ENCODE measurements at regions of chr1 and their contacts with region 1.

Region 1: GRCh38 chr1:221069178-221069903 is 190.1 kb downstream of the HLX start:
- DNase-seq: peak; percentile 59
- ATAC-seq: peak; percentile 83
- H3K4me3 Mint-ChIP-seq: peak overlapping the region; percentile 75
- H3K27ac Mint-ChIP-seq: peak overlapping the region; percentile 99
- H3K4me1 Mint-ChIP-seq: peaks cover 85% of the 10 kb centered on the region
- H3K27me3 Mint-ChIP-seq: no peaks in the 10 kb centered on the region
- CTCF ChIP-seq: no peak

Region 2: DNA sequence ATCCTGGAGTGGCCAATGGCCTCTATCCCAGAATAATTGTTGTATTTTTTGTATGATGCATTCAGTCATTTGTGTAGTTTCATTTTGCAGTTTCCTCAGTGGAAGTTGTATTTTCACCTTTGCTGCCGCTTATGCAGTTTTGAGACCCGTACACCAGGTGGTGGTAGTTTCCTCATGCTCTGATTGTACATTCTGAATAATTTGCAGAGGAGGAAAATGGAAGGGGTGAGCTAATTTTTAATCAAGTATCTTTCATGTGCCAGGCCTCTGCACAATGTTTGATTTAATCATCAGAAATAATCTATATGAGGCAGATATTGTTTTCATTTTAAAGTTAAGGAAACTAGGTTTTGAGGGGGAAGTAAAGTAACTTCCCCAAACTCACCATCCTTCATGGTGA is 160.6 kb before region 1 on chr1:
- CTCF ChIA-PET with region 1: interaction called, 7 read pairs
- POLR2A ChIA-PET with region 1: no interaction called
- intact Hi-C with region 1: loop called (anchors 5 kb)
- DNase-seq: no peak
- ATAC-seq: peak; percentile 52
- H3K4me3 Mint-ChIP-seq: no peak overlapping the region
- H3K27ac Mint-ChIP-seq: no peak overlapping the region
- H3K4me1 Mint-ChIP-seq: peaks cover 10% of the 10 kb centered on the region
- H3K27me3 Mint-ChIP-seq: peaks cover 9% of the 10 kb centered on the region
- CTCF ChIP-seq: no peak

Region 3: DNA sequence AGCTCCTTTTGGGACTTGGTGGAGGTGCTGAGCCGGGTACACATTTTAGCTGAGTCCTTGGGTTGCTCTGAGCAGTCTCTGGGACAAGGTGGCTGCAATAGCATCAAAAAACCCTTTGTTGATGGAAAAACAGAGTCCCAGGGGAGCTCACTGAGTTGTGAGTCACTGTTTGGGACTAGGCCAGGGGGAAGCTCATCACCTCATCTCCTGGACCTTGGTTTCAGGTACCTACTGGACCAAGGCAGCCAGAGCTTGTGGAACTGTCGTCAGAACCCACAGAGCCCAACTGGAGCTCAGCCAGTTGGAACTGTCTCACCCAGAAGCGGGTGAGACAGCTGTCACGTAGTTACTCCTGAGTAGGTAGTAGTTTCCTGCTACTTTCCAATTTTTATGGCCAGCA is 43.4 kb before region 1 on chr1:
- CTCF ChIA-PET with region 1: interaction called, 3 read pairs
- POLR2A ChIA-PET with region 1: interaction called, 7 read pairs
- intact Hi-C with region 1: loop called (anchors 1 kb)
- DNase-seq: peak; percentile 24
- ATAC-seq: peak; percentile 91
- H3K4me3 Mint-ChIP-seq: peak overlapping the region; percentile 9
- H3K27ac Mint-ChIP-seq: peak overlapping the region; percentile 54
- H3K4me1 Mint-ChIP-seq: peaks cover 24% of the 10 kb centered on the region
- H3K27me3 Mint-ChIP-seq: no peaks in the 10 kb centered on the region
- CTCF ChIP-seq: no peak

Region 4: GRCh38 chr1:221045842-221046831 is 23.2 kb before region 1 on chr1:
- CTCF ChIA-PET with region 1: no interaction called
- POLR2A ChIA-PET with region 1: interaction called, 57 read pairs
- intact Hi-C with region 1: loop called (anchors 1 kb)
- DNase-seq: no peak
- ATAC-seq: peak; percentile 90
- H3K4me3 Mint-ChIP-seq: peak overlapping the region; percentile 77
- H3K27ac Mint-ChIP-seq: peak overlapping the region; percentile 96
- H3K4me1 Mint-ChIP-seq: peaks cover 58% of the 10 kb centered on the region
- H3K27me3 Mint-ChIP-seq: no peaks in the 10 kb centered on the region
- CTCF ChIP-seq: no peak

Region 5: DNA sequence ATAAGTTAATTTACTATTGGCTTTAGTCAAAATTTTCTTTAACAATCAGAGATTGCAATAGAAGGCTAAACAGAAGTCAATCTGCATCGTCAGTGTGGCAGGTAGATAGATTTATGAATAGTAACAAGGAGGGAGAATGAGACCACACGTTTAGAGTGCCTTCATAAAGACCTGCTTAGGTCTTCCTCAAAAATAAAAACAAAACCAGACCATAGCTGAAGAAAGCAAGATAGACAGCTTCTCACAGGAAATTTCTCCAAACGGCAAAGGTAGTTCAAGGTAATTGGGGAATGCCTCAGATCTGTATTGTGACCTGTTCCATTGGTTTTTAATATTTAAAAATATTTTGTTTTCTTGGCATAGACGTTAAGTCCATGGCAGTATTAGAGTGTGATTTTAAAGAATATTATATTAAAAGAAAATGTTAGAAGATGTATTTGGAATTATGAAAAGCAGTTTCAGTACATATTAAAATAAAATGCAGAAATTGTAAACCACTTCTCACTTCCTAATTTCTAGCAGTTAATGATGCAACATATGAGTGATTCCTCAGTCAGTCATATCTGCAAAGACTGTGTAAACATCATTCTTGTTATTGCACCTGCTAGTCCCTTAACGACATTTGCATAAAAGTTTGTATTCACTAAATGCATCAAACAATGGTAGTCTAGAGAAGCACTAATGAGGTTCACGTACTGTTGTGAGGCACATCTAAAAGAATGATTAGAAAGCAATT is 87.9 kb after region 1 on chr1:
- CTCF ChIA-PET with region 1: no interaction called
- POLR2A ChIA-PET with region 1: no interaction called
- intact Hi-C with region 1: loop called (anchors 1 kb)
- DNase-seq: no peak
- ATAC-seq: peak; percentile 93
- H3K4me3 Mint-ChIP-seq: no peak overlapping the region
- H3K27ac Mint-ChIP-seq: peak overlapping the region; percentile 74
- H3K4me1 Mint-ChIP-seq: peaks cover 29% of the 10 kb centered on the region
- H3K27me3 Mint-ChIP-seq: peaks cover under 1% of the 10 kb centered on the region
- CTCF ChIP-seq: no peak

Region 6: DNA sequence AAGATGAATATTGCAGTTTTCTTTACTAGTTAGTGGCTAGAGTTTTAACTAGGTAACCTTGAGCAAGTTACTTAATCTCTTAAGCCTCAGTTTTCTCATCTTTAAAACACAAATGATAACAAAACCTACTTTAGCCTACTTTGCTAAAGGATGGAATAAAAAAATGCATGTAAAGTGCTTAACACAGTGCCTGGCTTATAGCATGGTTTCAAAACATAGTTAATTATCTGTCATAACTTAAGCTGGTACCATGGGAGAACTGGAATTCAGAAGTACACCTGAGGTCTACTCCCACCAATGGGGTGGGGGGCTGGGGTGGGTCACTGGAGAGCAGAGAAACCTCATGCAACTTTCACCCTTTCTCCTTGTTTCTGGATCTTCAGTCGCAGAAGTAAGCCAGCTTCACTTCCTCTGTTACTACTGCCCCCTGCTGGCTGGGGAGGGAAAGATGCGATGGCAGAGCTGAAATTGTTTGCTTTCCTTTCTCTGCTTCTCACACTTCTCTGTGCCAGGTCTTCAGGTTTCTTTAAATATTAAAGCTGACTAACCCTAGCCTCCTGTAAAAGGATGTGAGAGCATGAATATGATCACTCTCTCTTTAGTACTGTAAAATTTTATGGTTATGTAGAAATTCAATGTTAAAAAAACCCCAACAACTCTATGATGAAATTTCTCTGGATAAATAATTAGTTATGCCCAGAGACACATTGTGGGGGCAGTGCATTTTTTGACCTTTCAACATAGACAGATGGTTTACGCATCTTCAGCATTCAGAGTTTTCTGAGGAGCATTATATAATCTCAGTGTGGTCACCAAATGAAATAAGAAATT is 134.1 kb after region 1 on chr1:
- CTCF ChIA-PET with region 1: interaction called, 13 read pairs
- POLR2A ChIA-PET with region 1: interaction called, 3 read pairs
- intact Hi-C with region 1: loop called (anchors 2 kb)
- DNase-seq: peak; percentile 59
- ATAC-seq: peak; percentile 45
- H3K4me3 Mint-ChIP-seq: no peak overlapping the region
- H3K27ac Mint-ChIP-seq: no peak overlapping the region
- H3K4me1 Mint-ChIP-seq: peaks cover 3% of the 10 kb centered on the region
- H3K27me3 Mint-ChIP-seq: peaks cover 7% of the 10 kb centered on the region
- CTCF ChIP-seq: no peak

Region 7: DNA sequence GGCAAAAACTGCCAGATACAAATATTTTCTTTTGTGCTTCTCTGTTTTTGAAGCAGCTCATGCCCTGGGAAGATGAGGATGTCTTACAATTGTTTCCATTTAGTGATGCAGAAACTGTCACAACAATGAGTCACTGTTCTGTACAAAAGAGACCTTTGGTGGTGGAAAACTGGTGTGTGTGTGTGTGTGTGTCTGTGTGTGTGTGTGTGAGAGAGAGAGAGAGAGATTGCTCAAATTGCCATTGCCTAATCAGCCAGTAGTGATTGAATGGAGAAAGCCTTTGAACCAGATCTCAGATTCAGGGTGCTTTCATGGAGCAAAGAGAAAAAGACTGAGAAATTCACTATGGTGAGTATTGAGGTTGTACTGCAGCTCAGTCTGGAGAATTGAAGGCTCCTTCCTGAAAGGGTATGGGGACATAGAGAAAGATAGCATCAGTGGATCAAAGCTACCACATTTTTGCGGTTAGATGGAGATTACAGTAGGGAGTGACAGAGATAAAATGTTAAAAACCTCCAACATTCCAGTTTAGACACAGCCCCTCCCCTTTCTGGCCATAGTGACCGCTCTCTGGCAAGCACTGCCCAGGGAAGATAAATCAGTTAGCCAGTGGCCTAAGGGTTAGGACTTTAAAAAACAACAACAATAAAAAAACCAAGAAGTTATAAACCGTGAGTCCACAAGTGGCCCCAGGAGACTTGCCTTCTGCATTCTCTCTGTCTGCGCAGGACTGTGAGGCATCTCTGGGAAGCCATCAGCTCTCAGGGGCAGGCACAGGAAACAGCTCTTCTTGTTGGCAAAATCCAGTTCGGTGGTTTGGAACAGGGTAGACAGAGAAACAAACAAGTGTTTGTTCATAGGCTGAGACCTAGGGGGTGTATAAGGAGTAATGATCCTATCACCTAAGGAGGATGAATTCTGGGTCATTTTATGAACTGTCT is 266.1 kb after region 1 on chr1:
- CTCF ChIA-PET with region 1: no interaction called
- POLR2A ChIA-PET with region 1: no interaction called
- intact Hi-C with region 1: no loop called
- DNase-seq: no peak
- ATAC-seq: no peak
- H3K4me3 Mint-ChIP-seq: no peak overlapping the region
- H3K27ac Mint-ChIP-seq: no peak overlapping the region
- H3K4me1 Mint-ChIP-seq: no peaks in the 10 kb centered on the region
- H3K27me3 Mint-ChIP-seq: peaks cover 4% of the 10 kb centered on the region
- CTCF ChIP-seq: no peak